Activated CD4-positive, alpha-beta T cell treated with anti-CD3 and anti-CD28 coated beads, Interleukin-2, amount 10 ng/mL, durations not matched to agents 24 days and 14 days (primary cell): ENCODE measurements at regions of chr19 and their contacts with region 1.

Region 1: GRCh38 chr19:41263850-41264580 is at the start of gene HNRNPUL1:
- DNase-seq: peak; percentile 100
- H3K4me3 Mint-ChIP-seq: peak within 1 kb of the TSS; percentile 92
- H3K27ac Mint-ChIP-seq: peak within 1 kb of the TSS; percentile 100
- H3K4me1 Mint-ChIP-seq: peaks cover 47% of the 10 kb centered on the region
- H3K27me3 Mint-ChIP-seq: peaks cover 8% of the 10 kb centered on the region
- total RNA-seq, gene HNRNPUL1: 256 and 258 TPM in 2 replicates

Region 2: GRCh38 chr19:40716655-40717324 is 547.2 kb before region 1 on chr19 and contains the starts of genes COQ8B and ITPKC:
- intact Hi-C with region 1: loop called (anchors 2 kb)
- DNase-seq: peak; percentile 100
- H3K4me3 Mint-ChIP-seq: peak within 1 kb of the TSS; percentile 90
- H3K27ac Mint-ChIP-seq: peak within 1 kb of the TSS; percentile 94
- H3K4me1 Mint-ChIP-seq: peaks cover 52% of the 10 kb centered on the region
- H3K27me3 Mint-ChIP-seq: no peaks in the 10 kb centered on the region
- total RNA-seq, gene COQ8B: 32.5 and 33.4 TPM in 2 replicates
- total RNA-seq, gene ITPKC: 7.7 and 8.6 TPM in 2 replicates

Region 3: DNA sequence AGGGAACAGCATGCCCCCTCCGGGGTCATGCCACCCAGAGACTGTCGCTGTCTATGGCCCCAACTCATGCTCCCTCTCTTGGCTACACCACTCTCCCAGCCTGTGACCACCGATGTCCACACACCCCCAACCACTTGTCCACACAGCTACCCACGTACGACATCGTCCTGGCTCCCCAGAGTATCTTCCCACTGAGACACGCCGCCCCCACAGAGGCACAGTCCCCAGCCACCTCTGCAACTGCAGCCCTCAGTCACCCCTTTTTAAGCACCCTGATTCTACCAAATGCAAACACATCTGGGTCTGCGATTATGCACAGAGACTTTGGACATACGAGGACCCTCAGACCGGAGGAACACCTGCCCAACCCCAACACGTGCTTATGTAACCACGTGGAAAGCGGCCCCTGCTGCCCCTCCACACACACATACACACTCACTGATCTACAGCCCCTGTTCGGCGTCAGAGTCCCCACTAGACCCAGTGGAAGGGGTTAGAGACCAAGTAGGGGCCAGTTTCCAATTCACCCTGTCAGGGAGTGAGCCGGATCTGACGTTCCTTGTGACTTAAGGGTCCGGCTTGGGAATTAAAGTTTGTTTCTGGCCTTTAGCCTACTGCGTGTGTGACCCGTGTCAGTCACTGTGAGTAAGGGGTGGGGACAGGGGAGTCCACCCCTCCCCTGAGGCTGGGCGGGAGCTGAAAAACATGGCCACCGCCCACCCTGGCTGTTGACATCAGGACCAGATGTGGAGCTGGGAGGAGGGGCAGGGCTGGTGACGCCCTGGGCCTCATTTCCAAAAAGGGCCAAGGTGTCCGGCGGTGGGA is 56.9 kb before region 1 on chr19:
- intact Hi-C with region 1: loop called (anchors 1 kb)
- DNase-seq: no peak
- H3K4me3 Mint-ChIP-seq: no peak overlapping the region
- H3K27ac Mint-ChIP-seq: peak overlapping the region; percentile 35
- H3K4me1 Mint-ChIP-seq: peaks cover 14% of the 10 kb centered on the region
- H3K27me3 Mint-ChIP-seq: no peaks in the 10 kb centered on the region

Region 4: DNA sequence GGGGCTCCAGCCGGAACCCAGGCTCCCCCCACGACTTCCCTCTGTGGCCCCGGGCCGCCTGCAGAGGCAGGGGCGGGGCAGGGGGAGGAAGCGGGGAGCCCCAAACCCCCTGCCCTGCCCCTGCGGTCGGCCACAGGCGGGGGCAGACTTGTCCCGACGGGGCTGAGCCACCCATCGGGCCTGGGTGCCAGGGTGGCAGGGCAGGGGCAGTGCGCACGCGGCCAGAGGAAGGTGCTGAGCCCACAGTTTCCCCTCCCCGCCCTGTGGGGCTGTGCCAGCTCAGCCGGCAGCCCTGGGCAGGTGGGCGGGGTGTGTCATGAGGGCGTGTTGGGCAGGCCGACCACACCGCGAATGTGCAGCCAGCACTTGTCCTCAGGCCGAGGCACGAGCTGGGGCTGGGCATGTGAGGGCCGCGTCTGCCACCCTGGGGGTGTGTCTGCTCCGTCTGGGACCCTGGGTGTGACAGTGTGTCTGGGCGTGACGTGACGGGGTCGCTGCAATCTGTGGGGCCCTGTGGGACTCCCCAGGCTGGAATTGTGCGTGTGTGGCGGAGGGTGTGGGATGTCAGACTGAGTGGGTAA is 63.7 kb after region 1 on chr19:
- intact Hi-C with region 1: loop called (anchors 1 kb)
- DNase-seq: peak; percentile 90
- H3K4me3 Mint-ChIP-seq: peak overlapping the region; percentile 91
- H3K27ac Mint-ChIP-seq: peak overlapping the region; percentile 98
- H3K4me1 Mint-ChIP-seq: peaks cover 64% of the 10 kb centered on the region
- H3K27me3 Mint-ChIP-seq: no peaks in the 10 kb centered on the region

Region 5: GRCh38 chr19:41397086-41398049 is 133.4 kb after region 1 on chr19 and contains the starts of genes BCKDHA and EXOSC5:
- intact Hi-C with region 1: loop called (anchors 1 kb)
- DNase-seq: peak; percentile 100
- H3K4me3 Mint-ChIP-seq: peak within 1 kb of the TSS; percentile 99
- H3K27ac Mint-ChIP-seq: peak within 1 kb of the TSS; percentile 100
- H3K4me1 Mint-ChIP-seq: peaks cover 39% of the 10 kb centered on the region
- H3K27me3 Mint-ChIP-seq: no peaks in the 10 kb centered on the region
- total RNA-seq, gene BCKDHA: 11.4 and 20.1 TPM in 2 replicates
- total RNA-seq, gene EXOSC5: 65.8 and 69.2 TPM in 2 replicates